ENCODE measurements at regions of chr3 and their contacts with region 1.

Region 1: DNA sequence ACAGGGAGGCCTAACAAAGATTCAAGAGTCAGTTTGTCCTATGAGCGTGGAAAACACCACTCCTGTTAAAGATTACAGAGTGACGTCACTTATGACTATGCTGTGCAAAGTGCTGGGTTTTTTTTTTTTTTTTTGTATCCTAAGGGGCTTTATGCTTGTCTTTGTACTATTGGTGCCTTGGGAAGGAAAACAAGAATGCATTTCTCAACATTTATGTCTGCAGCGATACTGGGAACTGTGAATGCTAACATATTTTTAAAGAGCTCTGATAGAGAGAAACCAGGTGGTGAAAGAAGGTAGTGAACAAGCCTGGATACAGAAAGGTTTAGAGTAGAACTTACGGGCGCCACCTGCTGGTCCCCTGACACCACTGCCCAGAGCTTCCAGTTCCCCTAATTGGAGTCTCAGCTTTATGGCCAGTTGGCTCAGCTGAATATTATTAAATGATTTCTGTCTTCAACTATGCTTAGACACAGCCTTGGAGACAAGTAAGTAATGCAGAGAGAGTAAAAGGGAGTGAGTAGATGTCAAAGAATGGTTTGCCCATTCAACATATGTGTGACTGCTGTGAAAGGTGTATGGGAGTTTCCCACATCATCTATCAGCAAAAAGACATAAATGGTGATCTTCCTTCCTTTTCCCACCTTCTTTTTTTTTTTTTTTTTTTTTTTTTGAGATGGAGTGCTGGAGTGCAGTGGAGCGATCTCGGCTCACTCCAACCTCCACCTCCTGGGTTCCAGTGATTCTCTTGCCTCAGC is 807.9 kb upstream of the CFAP20DC start:
- DNase-seq: peak; percentile 68 to 81
- H3K4me3 ChIP-seq: no peak overlapping the region
- H3K27ac ChIP-seq: no peak overlapping the region
- H3K4me1 ChIP-seq: no peaks in the 10 kb centered on the region
- H3K27me3 ChIP-seq: no peaks in the 10 kb centered on the region
- CTCF ChIP-seq: peak; percentile 82 to 96 (median 94)
- POLR2A ChIP-seq: no peak

Region 2: DNA sequence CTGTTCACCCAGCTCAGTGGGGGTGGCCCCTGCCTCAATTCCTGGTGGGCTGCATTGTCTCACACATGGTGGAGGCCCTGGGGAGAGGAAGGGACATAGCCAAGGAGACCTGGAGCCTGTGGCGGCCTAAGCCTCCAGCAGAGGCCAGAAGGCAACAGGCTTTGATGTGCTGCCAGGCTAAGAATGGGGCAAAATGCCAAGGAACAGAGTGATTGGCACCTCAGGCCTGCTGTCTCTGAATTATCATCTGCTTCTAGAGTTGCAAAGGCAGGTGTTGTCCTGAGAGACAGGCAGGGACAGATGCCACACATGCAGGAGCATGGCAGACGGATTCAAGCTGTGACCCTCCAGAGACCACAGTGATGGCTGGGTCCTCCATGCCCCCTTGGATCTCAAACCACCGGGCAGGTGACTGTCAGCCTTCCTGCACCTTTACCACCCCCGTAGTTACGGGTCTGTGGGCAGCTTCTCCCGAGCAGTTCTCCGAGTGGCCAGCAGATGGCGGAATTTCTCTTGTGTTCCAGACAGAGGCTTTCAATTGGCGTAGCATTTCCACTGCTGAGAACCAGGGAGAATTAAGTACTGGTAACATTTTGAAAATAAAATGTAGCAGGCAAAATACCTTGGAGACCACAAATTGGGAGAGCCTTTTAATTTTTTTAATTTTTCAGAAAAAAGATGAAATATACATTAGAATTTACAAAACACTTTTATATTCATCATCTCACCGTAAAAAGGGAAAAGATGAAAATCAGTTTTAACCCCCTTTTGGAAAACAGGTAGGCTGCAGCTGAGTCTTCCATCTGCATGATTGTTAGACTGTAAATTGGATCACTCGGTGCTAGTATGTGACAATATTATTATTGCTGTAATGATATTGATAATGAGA is 282.4 kb before region 1 on chr3:
- intact Hi-C with region 1: loop called (anchors 10 kb)
- DNase-seq: peak; percentile 86 to 90
- H3K4me3 ChIP-seq: no peak overlapping the region
- H3K27ac ChIP-seq: peak overlapping the region; percentile 39 to 54
- H3K4me1 ChIP-seq: peaks cover 0 to 6% of the 10 kb centered on the region in 2 donors
- H3K27me3 ChIP-seq: no peaks in the 10 kb centered on the region
- CTCF ChIP-seq: peak; percentile 92 to 98 (median 94)
- POLR2A ChIP-seq: no peak

Region 3: DNA sequence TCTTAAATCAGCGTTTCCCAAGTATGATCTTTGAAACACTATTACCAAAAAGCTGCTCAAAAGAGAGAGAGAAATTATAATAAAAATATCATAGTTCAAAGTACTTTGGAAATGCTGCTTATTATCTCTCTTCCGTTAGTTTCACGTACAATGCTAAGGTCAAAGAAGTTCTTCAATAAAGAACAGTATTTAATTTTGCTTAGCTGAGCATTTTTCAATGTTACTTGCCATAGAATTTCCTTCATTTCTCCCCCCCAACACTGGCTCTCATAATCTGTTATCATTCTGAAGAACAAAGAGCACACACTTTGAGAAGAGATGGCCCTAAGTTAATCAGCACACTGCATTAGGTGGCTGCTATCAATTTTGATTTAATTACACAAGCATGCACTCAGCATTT is 32.9 kb after region 1 on chr3:
- intact Hi-C with region 1: loop called (anchors 2 kb)
- DNase-seq: no peak
- H3K4me3 ChIP-seq: no peak overlapping the region
- H3K27ac ChIP-seq: no peak overlapping the region
- H3K4me1 ChIP-seq: no peaks in the 10 kb centered on the region
- H3K27me3 ChIP-seq: no peaks in the 10 kb centered on the region
- CTCF ChIP-seq: no peak
- POLR2A ChIP-seq: no peak

Region 4: GRCh38 chr3:60603860-60604259 is 746.1 kb after region 1 on chr3:
- intact Hi-C with region 1: loop called (anchors 5 kb)
- DNase-seq: no peak
- H3K4me3 ChIP-seq: no peak overlapping the region
- H3K27ac ChIP-seq: no peak overlapping the region
- H3K4me1 ChIP-seq: no peaks in the 10 kb centered on the region
- H3K27me3 ChIP-seq: no peaks in the 10 kb centered on the region
- CTCF ChIP-seq: no peak
- POLR2A ChIP-seq: no peak

Region 5: DNA sequence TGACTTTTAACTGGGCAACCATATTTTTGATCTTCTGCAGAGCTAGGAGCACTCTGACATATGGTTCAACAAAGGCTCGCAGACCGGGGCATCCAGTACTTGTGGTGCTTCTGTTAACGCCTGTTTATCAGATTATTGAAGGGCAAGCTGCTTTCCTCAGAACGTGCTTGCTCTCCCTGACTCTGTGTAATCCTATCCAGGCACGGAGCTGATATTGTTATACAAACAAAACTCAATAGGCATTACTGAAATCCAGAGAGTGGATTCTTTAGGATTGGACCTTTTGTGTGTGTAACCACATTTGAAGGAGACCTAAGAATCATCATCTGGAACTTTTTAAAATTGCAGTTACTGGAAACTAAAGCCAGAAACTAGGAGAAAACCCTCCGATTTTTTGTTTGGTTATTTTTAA is 1950.1 kb after region 1 on chr3:
- intact Hi-C with region 1: no loop called
- DNase-seq: no peak
- H3K4me3 ChIP-seq: no peak overlapping the region
- H3K27ac ChIP-seq: peak overlapping the region; percentile 48 to 53
- H3K4me1 ChIP-seq: no peaks in the 10 kb centered on the region
- H3K27me3 ChIP-seq: no peaks in the 10 kb centered on the region
- CTCF ChIP-seq: no peak
- POLR2A ChIP-seq: no peak

Measured in breast epithelium (tissue), 4 donors.